Adrenal gland (tissue), 19 donors: ENCODE measurements at regions of chr13 and their contacts with region 1.

Region 1: GRCh38 chr13:20940083-20940880 is 37.7 kb upstream of the XPO4 start:
- DNase-seq: no peak
- H3K4me3 ChIP-seq: no peak overlapping the region
- H3K27ac ChIP-seq: no peak overlapping the region
- H3K4me1 ChIP-seq: no peaks in the 10 kb centered on the region
- H3K27me3 ChIP-seq: peaks cover 5% of the 10 kb centered on the region
- CTCF ChIP-seq: no peak
- POLR2A ChIP-seq: no peak

Region 2: GRCh38 chr13:20960663-20961309 is 20.5 kb after region 1 on chr13:
- intact Hi-C with region 1: no loop called
- DNase-seq: no peak
- H3K4me3 ChIP-seq: no peak overlapping the region
- H3K27ac ChIP-seq: no peak overlapping the region
- H3K4me1 ChIP-seq: no peaks in the 10 kb centered on the region
- H3K27me3 ChIP-seq: peaks cover 3% of the 10 kb centered on the region
- CTCF ChIP-seq: no peak
- POLR2A ChIP-seq: no peak

Region 3: DNA sequence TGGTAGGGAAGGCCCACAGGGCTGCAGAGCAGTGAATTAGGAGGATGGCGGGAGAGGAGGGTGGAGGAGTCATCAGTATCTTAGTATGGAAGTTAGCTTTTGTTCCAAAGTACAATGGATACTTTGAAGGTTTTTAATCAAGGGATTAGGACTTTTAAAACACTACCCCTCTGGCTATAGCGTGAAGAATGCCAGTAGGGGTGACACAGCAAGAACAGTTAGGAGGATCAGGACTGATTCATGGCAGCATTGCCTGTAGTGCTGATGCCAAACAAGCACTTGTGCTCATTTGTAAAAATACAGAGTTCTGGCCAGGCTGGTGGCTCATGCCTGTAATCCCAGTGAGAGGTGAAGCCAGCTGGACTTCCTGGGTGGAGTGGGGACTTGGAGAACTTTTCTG is 189.8 kb after region 1 on chr13:
- intact Hi-C with region 1: loop called (anchors 5 to 10 kb)
- DNase-seq: no peak
- H3K4me3 ChIP-seq: no peak overlapping the region
- H3K27ac ChIP-seq: no peak overlapping the region
- H3K4me1 ChIP-seq: no peaks in the 10 kb centered on the region
- H3K27me3 ChIP-seq: peaks cover 4% of the 10 kb centered on the region
- CTCF ChIP-seq: no peak
- POLR2A ChIP-seq: no peak